HCT116 (cell line): ENCODE measurements at regions of chr4 and their contacts with region 1.

Region 1: GRCh38 chr4:82201805-82202641 is 171.8 kb downstream of the HNRNPD start:
- DNase-seq: peak; percentile 36
- ATAC-seq: peak; percentile 84
- H3K4me3 ChIP-seq: no peak overlapping the region
- H3K27ac ChIP-seq: no peak overlapping the region
- H3K4me1 ChIP-seq: no peaks in the 10 kb centered on the region
- H3K27me3 ChIP-seq: no peaks in the 10 kb centered on the region
- CTCF ChIP-seq: peak; percentile 69 to 91 (median 72)
- POLR2A ChIP-seq: no peak
- RAD21 ChIP-seq: peak; percentile 86

Region 2: DNA sequence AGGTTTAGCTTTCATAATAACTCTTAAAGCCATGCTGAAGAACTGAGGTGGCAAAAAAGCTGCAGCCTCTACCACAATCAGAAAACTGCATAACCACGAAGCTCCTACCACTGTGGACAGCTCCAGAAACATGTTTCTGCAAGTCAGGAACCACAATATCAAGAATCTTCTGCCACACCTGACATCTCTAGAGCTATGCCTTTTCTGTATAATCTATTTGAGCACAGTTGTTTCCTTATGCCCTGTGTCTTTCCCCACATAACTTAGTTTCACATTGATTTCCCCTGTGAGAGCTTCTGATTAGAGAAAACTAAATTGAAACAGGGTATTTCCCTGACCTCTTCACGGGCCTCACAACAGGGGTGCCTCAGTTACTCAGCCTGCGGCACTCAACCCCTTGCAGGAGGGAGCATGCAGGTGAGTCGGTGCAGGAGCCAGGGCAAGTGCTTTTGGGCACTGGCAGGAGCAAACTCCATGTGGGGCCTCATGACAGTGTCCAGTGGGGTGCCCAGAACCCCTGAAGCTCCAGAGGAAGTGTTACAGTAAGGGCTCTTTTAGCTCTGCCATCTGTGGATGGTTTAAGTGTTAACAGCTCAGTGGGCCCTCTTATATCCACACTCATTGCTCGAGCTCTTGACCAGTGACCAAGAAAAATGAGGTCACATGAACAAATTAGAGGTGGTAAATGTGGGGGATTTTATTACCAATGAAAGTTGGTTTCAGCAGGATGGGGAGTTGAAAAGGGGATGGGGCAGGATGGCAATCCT is 1304.3 kb before region 1 on chr4:
- CTCF ChIA-PET with region 1: no interaction called
- POLR2A ChIA-PET with region 1: no interaction called
- RAD21 ChIA-PET with region 1: no interaction called
- intact Hi-C with region 1: no loop called
- DNase-seq: no peak
- ATAC-seq: no peak
- H3K4me3 ChIP-seq: no peak overlapping the region
- H3K27ac ChIP-seq: no peak overlapping the region
- H3K4me1 ChIP-seq: no peaks in the 10 kb centered on the region
- H3K27me3 ChIP-seq: peaks cover 34% of the 10 kb centered on the region
- CTCF ChIP-seq: no peak
- POLR2A ChIP-seq: no peak
- RAD21 ChIP-seq: no peak

Region 3: DNA sequence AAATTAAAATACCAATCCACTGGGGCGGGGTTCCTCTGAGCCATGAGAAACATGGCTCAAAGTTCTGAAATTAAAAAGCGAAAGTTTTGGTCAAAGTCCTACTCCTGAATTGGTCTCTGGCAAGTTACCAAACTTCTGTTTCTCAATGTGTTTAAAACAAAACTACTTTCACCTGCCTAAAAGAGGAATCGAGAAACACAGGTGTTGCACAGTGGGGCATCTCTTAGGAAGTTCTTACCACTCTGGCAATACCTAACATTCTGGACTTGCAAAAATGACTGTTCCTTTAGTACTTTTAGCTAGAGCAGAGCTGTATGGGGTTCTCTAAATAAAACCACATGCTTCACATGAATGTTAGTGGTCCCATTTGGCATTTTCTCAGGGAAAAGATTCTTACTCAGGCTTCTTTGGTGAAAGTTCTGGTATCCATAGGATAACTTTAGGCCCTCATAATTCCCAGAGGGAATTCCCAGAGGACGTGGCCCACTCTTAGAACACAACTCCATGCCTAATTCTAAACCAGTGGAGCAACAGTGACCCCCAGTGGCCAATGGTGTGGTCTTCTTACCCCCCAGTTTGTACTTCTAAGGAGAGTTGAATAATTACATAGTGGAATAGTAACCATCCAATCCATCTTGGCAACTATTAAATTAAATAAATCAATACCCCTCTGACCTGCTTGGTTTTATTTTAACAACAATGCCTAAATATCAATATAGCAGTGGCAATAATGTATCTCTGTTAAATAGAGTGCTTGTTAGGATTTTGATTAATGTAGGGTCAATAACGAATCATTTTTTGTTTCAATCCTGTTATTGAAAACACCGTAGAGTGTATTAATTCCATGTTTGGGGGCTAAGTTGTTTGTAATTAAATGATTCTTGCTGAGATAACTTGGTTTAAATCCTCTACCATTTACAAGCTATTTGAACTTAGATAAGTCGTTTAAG is 1149.6 kb before region 1 on chr4:
- CTCF ChIA-PET with region 1: no interaction called
- POLR2A ChIA-PET with region 1: no interaction called
- RAD21 ChIA-PET with region 1: no interaction called
- intact Hi-C with region 1: loop called (anchors 10 kb)
- DNase-seq: peak; percentile 59
- ATAC-seq: peak; percentile 99
- H3K4me3 ChIP-seq: no peak overlapping the region
- H3K27ac ChIP-seq: no peak overlapping the region
- H3K4me1 ChIP-seq: no peaks in the 10 kb centered on the region
- H3K27me3 ChIP-seq: peaks cover 48% of the 10 kb centered on the region
- CTCF ChIP-seq: peak; percentile 48 to 79 (median 75); a peak in 5 of 6 replicates
- POLR2A ChIP-seq: no peak
- RAD21 ChIP-seq: peak; percentile 70

Region 4: DNA sequence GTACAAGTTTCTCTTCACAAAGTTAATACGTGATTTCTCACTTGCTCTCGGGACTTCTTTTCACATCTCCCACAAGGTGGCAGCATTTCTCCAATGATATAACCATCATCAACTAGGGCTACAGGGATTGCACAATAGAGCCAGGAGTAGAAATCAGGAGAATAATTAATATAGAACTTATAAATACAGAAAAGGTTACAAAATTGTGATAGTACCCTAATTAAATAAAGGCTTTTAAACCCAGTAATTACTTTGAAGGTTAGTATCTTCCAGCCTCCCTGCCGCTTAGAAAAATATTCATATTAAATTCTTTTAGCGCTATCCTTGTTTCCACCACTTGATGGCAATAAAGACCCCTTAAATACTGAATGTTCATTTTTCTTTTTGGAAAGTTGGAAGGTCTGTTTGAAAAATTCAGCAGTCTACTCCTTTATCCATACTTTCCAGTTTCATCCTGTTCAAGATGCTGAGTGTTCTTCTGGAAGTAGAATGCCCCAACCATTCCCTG is 796.1 kb before region 1 on chr4:
- CTCF ChIA-PET with region 1: interaction called, 4 read pairs
- POLR2A ChIA-PET with region 1: no interaction called
- RAD21 ChIA-PET with region 1: no interaction called
- intact Hi-C with region 1: loop called (anchors 1 kb)
- DNase-seq: peak; percentile 68
- ATAC-seq: peak; percentile 84
- H3K4me3 ChIP-seq: no peak overlapping the region
- H3K27ac ChIP-seq: no peak overlapping the region
- H3K4me1 ChIP-seq: no peaks in the 10 kb centered on the region
- H3K27me3 ChIP-seq: peaks cover 26% of the 10 kb centered on the region
- CTCF ChIP-seq: peak; percentile 47 to 98 (median 73)
- POLR2A ChIP-seq: no peak
- RAD21 ChIP-seq: peak; percentile 72

Region 5: DNA sequence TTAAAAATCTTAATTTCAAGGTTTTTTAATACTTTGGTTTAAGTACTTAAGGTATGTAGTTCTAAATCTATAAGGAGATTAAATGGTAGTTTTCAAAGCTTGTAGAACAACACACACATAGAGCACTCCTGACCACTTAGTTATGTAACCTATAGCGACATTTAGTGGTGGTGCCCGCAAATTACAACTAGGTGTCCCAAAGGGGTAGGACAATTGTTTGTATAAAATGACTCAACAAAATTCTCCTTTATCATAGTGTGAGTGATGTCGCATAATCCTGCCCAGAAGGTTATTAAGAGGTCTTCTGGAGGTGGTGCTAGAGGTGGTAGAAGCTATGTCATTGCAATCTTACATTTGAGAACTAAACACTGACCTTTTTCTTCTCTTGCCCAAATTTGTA is 357.3 kb before region 1 on chr4:
- CTCF ChIA-PET with region 1: no interaction called
- POLR2A ChIA-PET with region 1: no interaction called
- RAD21 ChIA-PET with region 1: no interaction called
- intact Hi-C with region 1: loop called (anchors 1 kb)
- DNase-seq: peak; percentile 48
- ATAC-seq: peak; percentile 95
- H3K4me3 ChIP-seq: no peak overlapping the region
- H3K27ac ChIP-seq: no peak overlapping the region
- H3K4me1 ChIP-seq: no peaks in the 10 kb centered on the region
- H3K27me3 ChIP-seq: peaks cover 13% of the 10 kb centered on the region
- CTCF ChIP-seq: peak; percentile 58 to 83 (median 67); a peak in 4 of 6 replicates
- POLR2A ChIP-seq: no peak
- RAD21 ChIP-seq: peak; percentile 72

Region 6: GRCh38 chr4:81913427-81913879 is 288.6 kb before region 1 on chr4:
- CTCF ChIA-PET with region 1: no interaction called
- POLR2A ChIA-PET with region 1: no interaction called
- RAD21 ChIA-PET with region 1: no interaction called
- intact Hi-C with region 1: loop called (anchors 5 kb)
- DNase-seq: peak; percentile 49
- ATAC-seq: peak; percentile 93
- H3K4me3 ChIP-seq: no peak overlapping the region
- H3K27ac ChIP-seq: no peak overlapping the region
- H3K4me1 ChIP-seq: no peaks in the 10 kb centered on the region
- H3K27me3 ChIP-seq: peaks cover 18% of the 10 kb centered on the region
- CTCF ChIP-seq: peak; percentile 35 to 84 (median 83); a peak in 5 of 6 replicates
- POLR2A ChIP-seq: no peak
- RAD21 ChIP-seq: peak; percentile 33

Region 7: DNA sequence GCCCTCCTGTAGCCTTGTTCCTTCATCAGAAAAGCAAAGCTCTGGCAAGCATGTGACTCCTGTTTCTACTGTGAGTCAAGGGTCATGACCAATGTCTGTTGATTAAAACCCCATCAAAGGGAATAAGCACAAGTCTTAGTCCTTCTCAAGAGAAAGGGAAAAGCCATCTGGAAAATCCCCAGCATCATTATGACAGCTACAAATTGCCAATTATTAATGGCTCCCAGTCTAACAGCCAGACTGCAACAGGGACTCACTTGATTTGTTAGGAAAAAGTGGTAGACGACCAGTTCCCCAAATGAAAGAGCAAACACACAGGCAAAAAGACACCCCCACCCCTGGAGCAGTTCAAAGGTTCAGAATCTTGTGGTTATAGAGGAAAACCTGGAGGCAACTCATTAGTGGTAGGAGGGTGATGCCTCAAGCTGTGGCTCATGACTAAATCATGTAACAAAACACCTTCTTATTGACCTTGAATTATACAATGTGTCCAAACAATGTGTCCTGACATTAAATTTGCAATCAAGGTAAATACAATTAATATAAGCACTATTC is 144.0 kb before region 1 on chr4:
- CTCF ChIA-PET with region 1: no interaction called
- POLR2A ChIA-PET with region 1: no interaction called
- RAD21 ChIA-PET with region 1: no interaction called
- intact Hi-C with region 1: no loop called
- DNase-seq: no peak
- ATAC-seq: no peak
- H3K4me3 ChIP-seq: no peak overlapping the region
- H3K27ac ChIP-seq: no peak overlapping the region
- H3K4me1 ChIP-seq: no peaks in the 10 kb centered on the region
- H3K27me3 ChIP-seq: peaks cover 10% of the 10 kb centered on the region; the same call in 1 of the 2 replicates
- CTCF ChIP-seq: no peak
- POLR2A ChIP-seq: no peak
- RAD21 ChIP-seq: no peak